K562 (cell line): ENCODE measurements at regions of chrX and their contacts with region 1.

Region 1: GRCh38 chrX:64306712-64307111 is 76.3 kb upstream of the ASB12 start:
- DNase-seq: no peak
- ATAC-seq: no peak
- H3K4me3 ChIP-seq: no peak overlapping the region
- H3K27ac ChIP-seq: no peak overlapping the region
- H3K4me1 ChIP-seq: no peaks in the 10 kb centered on the region
- H3K27me3 ChIP-seq: no peaks in the 10 kb centered on the region
- CTCF ChIP-seq: no peak
- EP300 ChIP-seq: no peak
- POLR2A ChIP-seq: no peak
- RAD21 ChIP-seq: no peak

Region 2: GRCh38 chrX:64394874-64395567 is 88.3 kb after region 1 on chrX and contains the start of gene MTMR8:
- CTCF ChIA-PET with region 1: no interaction called
- POLR2A ChIA-PET with region 1: no interaction called
- in situ Hi-C with region 1: no loop called
- intact Hi-C with region 1: loop called (anchors 10 kb)
- DNase-seq: peak; percentile 76 to 80 (median 78)
- ATAC-seq: peak; percentile 97
- H3K4me3 ChIP-seq: peak within 1 kb of the TSS; percentile 47
- H3K27ac ChIP-seq: peak within 1 kb of the TSS; percentile 81
- H3K4me1 ChIP-seq: no peaks in the 10 kb centered on the region
- H3K27me3 ChIP-seq: no peaks in the 10 kb centered on the region
- CTCF ChIP-seq: no peak
- EP300 ChIP-seq: no peak
- POLR2A ChIP-seq: peak; percentile 44; the same call in 1 of the 2 replicates
- RAD21 ChIP-seq: no peak
- polyA plus RNA-seq, gene MTMR8: 2.8 to 5.4 TPM